ENCODE measurements at regions of chr1 and their contacts with region 1.

Region 1: DNA sequence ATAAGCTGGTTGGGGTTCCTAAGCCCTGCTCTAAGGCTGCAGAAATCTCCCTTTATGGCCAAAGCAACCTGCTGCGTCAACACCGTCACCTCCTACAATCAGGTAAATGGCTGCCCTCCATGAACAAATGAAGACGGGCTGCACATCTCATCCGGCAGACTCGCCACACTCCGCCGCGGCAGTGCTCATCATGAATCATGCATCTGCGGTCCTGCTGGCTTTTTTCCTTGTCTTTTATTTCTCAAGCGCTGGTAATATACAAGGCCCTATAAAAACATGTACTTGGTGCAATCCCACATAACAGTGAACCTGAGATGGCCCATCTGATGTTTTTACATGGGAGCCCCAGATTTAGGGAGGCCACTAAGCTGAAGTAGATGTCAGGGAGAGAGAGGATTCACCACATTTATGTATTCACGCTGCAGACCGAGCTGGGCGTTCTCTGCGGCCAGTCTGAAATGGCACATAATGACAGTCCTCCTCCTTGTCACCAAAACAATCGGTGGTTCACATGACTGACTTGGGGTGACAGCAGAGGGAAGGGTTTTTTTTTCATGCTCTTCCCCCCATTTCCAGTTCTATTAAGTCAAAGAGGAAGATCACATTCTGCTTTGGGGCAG is 91.6 kb downstream of the KAZN start:
- DNase-seq: no peak
- ATAC-seq: no peak
- H3K4me3 ChIP-seq: no peak overlapping the region
- H3K4me3 Mint-ChIP-seq: no peak overlapping the region
- H3K27ac ChIP-seq: no peak overlapping the region
- H3K27ac Mint-ChIP-seq: no peak overlapping the region
- H3K4me1 ChIP-seq: no peaks in the 10 kb centered on the region
- H3K4me1 Mint-ChIP-seq: no peaks in the 10 kb centered on the region
- H3K27me3 ChIP-seq: no peaks in the 10 kb centered on the region
- H3K27me3 Mint-ChIP-seq: peaks cover 18% of the 10 kb centered on the region in 2 donors
- CTCF ChIP-seq: no peak

Region 2: GRCh38 chr1:14626869-14627607 is 63.1 kb before region 1 on chr1:
- intact Hi-C with region 1: loop called (anchors 10 kb)
- DNase-seq: no peak
- ATAC-seq: no peak
- H3K4me3 ChIP-seq: no peak overlapping the region
- H3K4me3 Mint-ChIP-seq: no peak overlapping the region
- H3K27ac ChIP-seq: no peak overlapping the region
- H3K27ac Mint-ChIP-seq: no peak overlapping the region
- H3K4me1 ChIP-seq: no peaks in the 10 kb centered on the region
- H3K4me1 Mint-ChIP-seq: no peaks in the 10 kb centered on the region
- H3K27me3 ChIP-seq: no peaks in the 10 kb centered on the region
- H3K27me3 Mint-ChIP-seq: peaks cover 0 to 5% of the 10 kb centered on the region in 2 donors
- CTCF ChIP-seq: no peak

Region 3: GRCh38 chr1:14655385-14655784 is 34.7 kb before region 1 on chr1:
- intact Hi-C with region 1: loop called (anchors 2 kb)
- DNase-seq: no peak
- ATAC-seq: no peak
- H3K4me3 ChIP-seq: no peak overlapping the region
- H3K4me3 Mint-ChIP-seq: no peak overlapping the region
- H3K27ac ChIP-seq: no peak overlapping the region
- H3K27ac Mint-ChIP-seq: no peak overlapping the region
- H3K4me1 ChIP-seq: no peaks in the 10 kb centered on the region
- H3K4me1 Mint-ChIP-seq: no peaks in the 10 kb centered on the region
- H3K27me3 ChIP-seq: no peaks in the 10 kb centered on the region
- H3K27me3 Mint-ChIP-seq: peaks cover 3 to 8% of the 10 kb centered on the region in 2 donors
- CTCF ChIP-seq: no peak